ENCODE measurements at regions of chr22 and their contacts with region 1.

Region 1: DNA sequence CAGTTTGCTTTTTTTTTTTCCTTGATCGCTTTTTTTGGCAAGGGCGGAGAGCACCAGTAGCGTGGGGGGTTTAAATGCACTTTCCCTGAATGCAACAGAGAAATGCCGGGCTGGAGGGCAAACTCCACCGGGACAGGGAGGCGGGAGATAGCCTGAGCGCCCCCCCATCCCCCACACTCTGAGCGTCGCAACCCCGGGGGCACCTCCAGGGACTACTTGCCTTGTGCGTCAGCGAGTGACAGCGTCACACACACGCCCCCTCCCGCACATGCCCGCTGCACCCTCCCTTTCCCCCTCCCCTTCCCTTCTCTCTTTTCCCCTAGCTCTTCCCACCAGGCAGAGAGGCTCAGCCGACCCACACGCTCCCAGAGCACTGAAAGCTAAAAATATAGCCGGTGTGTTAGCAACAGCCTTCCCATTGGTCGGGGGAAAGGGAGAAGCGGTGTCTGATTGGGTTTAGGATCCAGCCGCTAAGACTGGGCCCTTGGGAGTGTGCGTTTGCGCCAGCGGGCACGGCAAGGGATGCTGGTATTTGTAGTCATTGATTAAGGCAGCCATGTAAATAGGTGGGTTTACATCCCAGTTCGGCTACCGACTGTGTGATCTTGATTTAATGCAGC is 1.7 kb upstream of the TOB2 start:
- DNase-seq: peak; percentile 90
- H3K4me3 Mint-ChIP-seq: peak overlapping the region; percentile 97
- H3K27ac Mint-ChIP-seq: peak overlapping the region; percentile 98
- H3K4me1 Mint-ChIP-seq: peaks cover 15% of the 10 kb centered on the region
- H3K27me3 Mint-ChIP-seq: peaks cover 2% of the 10 kb centered on the region

Region 2: GRCh38 chr22:40950962-40951794 is 497.1 kb before region 1 on chr22 and contains the start of gene RBX1:
- intact Hi-C with region 1: loop called (anchors 1 kb)
- DNase-seq: peak; percentile 98
- H3K4me3 Mint-ChIP-seq: peak within 1 kb of the TSS; percentile 98
- H3K27ac Mint-ChIP-seq: peak within 1 kb of the TSS; percentile 98
- H3K4me1 Mint-ChIP-seq: peaks cover 33% of the 10 kb centered on the region
- H3K27me3 Mint-ChIP-seq: no peaks in the 10 kb centered on the region
- total RNA-seq, gene RBX1: 90.9 and 94.4 TPM in 2 replicates

Region 3: DNA sequence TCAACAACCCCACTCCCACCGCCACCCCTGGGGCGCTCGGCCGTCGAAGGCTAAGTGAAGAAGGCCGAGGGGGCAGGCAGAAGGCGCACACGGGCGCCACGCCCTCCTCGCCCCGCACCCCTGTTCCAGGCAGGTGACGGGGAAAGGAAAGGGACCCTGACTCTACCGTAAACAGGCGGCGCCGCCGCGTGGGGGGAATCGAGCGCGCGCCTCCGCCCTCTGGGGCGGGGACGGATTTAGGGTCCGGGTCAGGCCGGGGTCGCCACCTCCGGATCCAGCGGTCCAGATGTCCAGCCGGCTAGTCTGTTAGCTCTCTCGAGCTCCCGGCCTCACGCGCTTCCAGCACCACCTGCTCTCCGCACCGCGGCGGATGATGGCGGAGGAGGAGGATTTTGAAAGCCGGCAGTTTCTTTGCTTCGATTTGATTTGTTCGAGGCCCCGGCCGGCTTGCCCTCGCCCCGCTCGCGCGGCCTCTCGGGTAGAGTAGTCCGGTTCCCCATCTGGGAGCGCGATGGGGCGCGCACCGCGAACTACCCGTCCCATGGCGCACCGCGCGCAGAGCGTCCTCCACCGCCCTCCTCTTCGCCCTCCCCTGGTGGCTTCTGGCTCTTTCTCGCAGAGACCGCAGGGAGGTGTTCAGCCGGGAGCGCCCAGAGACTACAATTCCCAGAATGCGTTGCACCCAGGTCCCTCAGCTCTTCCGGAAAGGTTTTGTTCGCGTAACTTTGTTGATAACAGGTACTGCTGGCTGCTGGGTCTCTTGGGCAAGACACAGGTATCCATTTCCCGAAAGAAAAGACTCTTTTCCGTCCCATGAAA is 162.3 kb before region 1 on chr22 and contains the start of gene RANGAP1:
- intact Hi-C with region 1: loop called (anchors 1 kb)
- DNase-seq: peak; percentile 98
- H3K4me3 Mint-ChIP-seq: peak within 1 kb of the TSS; percentile 95
- H3K27ac Mint-ChIP-seq: peak within 1 kb of the TSS; percentile 97
- H3K4me1 Mint-ChIP-seq: peaks cover 34% of the 10 kb centered on the region
- H3K27me3 Mint-ChIP-seq: no peaks in the 10 kb centered on the region
- total RNA-seq, gene RANGAP1: 197 and 199 TPM in 2 replicates

Region 4: GRCh38 chr22:41468381-41469217 is 20.3 kb after region 1 on chr22 and contains the starts of genes ACO2 and PHF5A:
- intact Hi-C with region 1: loop called (anchors 1 kb)
- DNase-seq: peak; percentile 98
- H3K4me3 Mint-ChIP-seq: peak within 1 kb of the TSS; percentile 87
- H3K27ac Mint-ChIP-seq: peak within 1 kb of the TSS; percentile 99
- H3K4me1 Mint-ChIP-seq: peaks cover 22% of the 10 kb centered on the region
- H3K27me3 Mint-ChIP-seq: no peaks in the 10 kb centered on the region
- total RNA-seq, gene ACO2: 99.1 and 101 TPM in 2 replicates
- total RNA-seq, gene PHF5A: 83.7 and 96.8 TPM in 2 replicates

Region 5: GRCh38 chr22:41621099-41621910 is 173.0 kb after region 1 on chr22 and contains the start of gene XRCC6:
- intact Hi-C with region 1: loop called (anchors 1 kb)
- DNase-seq: peak; percentile 97
- H3K4me3 Mint-ChIP-seq: peak within 1 kb of the TSS; percentile 93
- H3K27ac Mint-ChIP-seq: peak within 1 kb of the TSS; percentile 94
- H3K4me1 Mint-ChIP-seq: peaks cover 50% of the 10 kb centered on the region
- H3K27me3 Mint-ChIP-seq: no peaks in the 10 kb centered on the region
- total RNA-seq, gene XRCC6: 367 and 368 TPM in 2 replicates

Region 6: GRCh38 chr22:42079319-42080251 is 631.3 kb after region 1 on chr22 and contains the start of gene SMDT1:
- intact Hi-C with region 1: loop called (anchors 10 kb)
- DNase-seq: peak; percentile 98
- H3K4me3 Mint-ChIP-seq: peak within 1 kb of the TSS; percentile 89
- H3K27ac Mint-ChIP-seq: peak within 1 kb of the TSS; percentile 92
- H3K4me1 Mint-ChIP-seq: peaks cover 34% of the 10 kb centered on the region
- H3K27me3 Mint-ChIP-seq: no peaks in the 10 kb centered on the region
- total RNA-seq, gene SMDT1: 53.9 and 58.2 TPM in 2 replicates

Measured in activated T-helper 1 cell treated with anti-CD3 and anti-CD28 coated beads, Interleukin-12 subunit alpha, Interleukin-12 subunit beta, Interleukin-2, Interleukin-4 antibody, amounts not matched to agents 30 ng/mL and 10 ng/mL and 1 ng/mL, durations not matched to agents 14 hours and 24 hours and 36 hours (primary cell).